ENCODE measurements at regions of chr16 and their contacts with region 1.

Region 1: DNA sequence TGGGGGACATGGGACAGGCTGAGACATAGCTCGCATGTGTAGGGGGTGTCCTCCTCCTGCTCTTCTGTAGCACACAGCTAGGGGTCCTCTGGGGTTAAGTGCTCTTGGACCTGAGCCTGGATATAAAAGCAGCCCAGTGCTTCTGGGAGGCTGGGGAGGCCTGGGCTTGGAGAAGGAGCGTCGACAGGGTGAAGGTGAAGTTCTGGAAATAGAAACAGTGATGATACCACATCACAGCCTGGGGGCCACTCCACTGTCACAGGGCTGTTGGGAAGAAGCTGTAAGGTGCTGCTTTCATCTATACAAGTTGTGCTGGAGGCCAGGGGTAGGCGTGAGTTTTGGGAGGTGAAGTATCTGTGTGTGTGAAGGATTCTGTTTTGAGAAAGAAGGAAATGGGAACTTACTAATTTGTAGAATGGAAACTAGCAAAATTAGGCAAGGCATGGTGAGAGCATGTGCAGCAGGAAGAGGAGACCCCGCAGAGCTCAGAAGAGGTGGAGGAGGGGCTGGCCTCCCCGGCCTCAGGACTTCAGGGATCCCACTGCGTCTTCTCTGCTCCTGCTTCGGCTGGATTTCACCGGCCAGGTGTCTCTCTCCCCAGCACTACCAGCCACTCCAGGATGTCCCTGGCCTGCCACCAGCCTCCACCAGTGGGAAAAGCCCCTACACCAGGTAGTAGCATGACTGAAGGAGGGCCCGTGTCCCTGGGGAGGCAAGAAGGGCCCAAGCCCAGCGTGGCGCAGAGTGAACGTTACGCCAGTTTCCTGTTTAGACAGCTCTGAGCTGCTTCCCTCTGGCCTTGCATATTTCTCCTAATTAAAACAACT is 19.4 kb downstream of the PLCG2 start:
- DNase-seq: peak; percentile 70
- ATAC-seq: peak; percentile 79
- H3K4me3 Mint-ChIP-seq: peak overlapping the region; percentile 25
- H3K27ac Mint-ChIP-seq: peak overlapping the region; percentile 90
- H3K4me1 Mint-ChIP-seq: peaks cover 17% of the 10 kb centered on the region
- H3K27me3 Mint-ChIP-seq: no peaks in the 10 kb centered on the region

Region 2: DNA sequence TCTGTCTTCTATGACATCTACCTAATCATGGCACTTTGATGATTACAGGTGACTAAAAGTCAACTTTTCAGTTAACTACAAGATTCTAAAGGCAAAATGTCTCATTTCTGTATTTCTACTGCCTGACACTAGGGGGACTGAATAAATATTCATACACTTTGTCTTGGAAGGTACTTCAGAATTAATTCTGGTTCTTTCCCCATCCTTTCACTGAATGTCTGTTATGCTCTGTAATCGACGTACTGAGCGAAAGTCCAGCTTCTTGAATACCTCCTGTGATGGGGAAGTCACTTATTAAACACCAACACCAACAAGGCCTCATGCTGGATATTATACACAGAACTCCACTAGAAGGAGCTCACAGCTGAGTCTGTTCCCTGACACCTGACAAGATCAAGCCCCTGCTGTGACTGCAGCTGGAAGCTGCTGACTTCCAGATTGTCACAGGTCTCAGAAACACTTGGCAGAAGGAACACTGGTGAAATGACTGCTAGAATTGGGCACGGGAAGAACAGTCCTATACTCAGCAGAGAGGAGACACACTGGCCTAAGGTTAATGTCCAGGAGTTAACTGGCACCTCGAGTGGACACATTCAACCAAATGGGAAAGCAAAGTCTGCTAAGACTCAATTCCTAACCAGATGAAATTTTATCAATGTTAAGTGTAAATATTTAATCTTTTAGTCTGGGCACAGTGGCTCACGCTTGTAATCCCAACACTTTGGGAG is 823.7 kb before region 1 on chr16:
- CTCF ChIA-PET with region 1: no interaction called
- POLR2A ChIA-PET with region 1: interaction called, 10 read pairs
- intact Hi-C with region 1: no loop called
- DNase-seq: no peak
- ATAC-seq: peak; percentile 70
- H3K4me3 Mint-ChIP-seq: no peak overlapping the region
- H3K27ac Mint-ChIP-seq: no peak overlapping the region
- H3K4me1 Mint-ChIP-seq: peaks cover 10% of the 10 kb centered on the region
- H3K27me3 Mint-ChIP-seq: no peaks in the 10 kb centered on the region

Region 3: DNA sequence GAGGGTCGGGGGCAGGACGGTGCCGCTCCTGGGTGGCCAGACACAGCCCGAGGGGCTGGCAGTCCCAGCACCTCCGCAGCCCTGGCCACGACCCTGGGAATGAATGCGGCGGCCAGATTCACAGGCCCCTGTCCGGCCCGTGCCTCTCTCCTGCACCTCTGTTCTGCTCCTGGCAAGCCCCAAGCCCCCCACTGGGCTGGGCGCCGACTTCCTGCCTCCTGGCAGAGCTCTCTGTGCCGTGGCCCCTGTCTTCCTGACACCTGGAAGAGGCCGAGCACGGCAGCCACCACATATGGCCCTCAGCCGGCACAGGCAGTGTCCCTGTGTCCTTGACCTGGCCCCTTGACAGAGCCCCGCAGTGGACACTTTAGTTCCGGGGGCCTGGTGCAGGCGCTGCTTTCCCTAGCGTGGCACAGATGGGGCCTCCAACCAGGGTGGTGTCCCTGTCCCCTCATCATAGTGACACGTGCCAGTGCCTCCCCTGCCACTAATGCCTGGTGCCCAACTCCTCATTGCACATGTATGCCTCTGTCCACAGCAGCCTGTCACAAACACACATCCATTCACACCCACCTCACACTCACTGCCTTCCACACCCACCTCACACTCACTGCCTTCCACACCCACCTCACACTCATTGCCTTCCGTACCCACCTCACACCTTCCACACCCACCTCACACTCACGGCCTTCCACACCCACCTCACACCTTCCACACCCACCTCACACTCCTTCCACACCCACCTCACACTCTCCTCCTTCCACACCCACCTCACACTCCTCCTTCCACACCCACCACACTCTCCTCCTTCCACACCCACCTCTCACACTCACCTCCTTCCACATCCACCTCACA is 130.1 kb before region 1 on chr16:
- CTCF ChIA-PET with region 1: no interaction called
- POLR2A ChIA-PET with region 1: no interaction called
- intact Hi-C with region 1: no loop called
- DNase-seq: no peak
- ATAC-seq: peak; percentile 26
- H3K4me3 Mint-ChIP-seq: no peak overlapping the region
- H3K27ac Mint-ChIP-seq: no peak overlapping the region
- H3K4me1 Mint-ChIP-seq: no peaks in the 10 kb centered on the region
- H3K27me3 Mint-ChIP-seq: no peaks in the 10 kb centered on the region